ENCODE measurements at regions of chr10 and their contacts with region 1.

Region 1: DNA sequence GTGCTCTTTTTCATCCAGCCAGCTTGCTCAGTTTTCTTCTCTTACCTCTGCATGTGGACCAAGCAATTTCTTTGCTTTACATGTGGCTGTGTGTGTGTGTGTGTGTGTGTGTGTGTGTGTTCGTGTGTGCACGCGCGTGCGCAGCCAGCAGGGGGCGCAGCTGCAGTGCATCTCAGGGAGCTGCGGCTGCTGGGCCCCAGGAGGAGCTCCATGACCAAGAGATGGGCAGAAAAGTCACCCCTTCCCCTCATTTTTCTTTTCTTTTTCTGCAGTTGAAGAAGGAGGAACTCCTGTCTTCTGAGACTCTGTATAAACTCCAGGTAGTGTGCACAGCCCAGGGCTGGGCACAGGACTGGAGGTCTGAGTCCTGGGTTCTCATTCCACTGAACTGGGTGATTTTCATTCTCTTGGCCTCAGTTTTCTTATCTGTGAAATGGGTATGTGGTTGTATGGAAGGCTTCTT is 41.8 kb downstream of the BLNK start:
- DNase-seq: peak; percentile 80
- H3K4me3 Mint-ChIP-seq: no peak overlapping the region
- H3K27ac Mint-ChIP-seq: no peak overlapping the region
- H3K4me1 Mint-ChIP-seq: no peaks in the 10 kb centered on the region
- H3K27me3 Mint-ChIP-seq: no peaks in the 10 kb centered on the region

Region 2: DNA sequence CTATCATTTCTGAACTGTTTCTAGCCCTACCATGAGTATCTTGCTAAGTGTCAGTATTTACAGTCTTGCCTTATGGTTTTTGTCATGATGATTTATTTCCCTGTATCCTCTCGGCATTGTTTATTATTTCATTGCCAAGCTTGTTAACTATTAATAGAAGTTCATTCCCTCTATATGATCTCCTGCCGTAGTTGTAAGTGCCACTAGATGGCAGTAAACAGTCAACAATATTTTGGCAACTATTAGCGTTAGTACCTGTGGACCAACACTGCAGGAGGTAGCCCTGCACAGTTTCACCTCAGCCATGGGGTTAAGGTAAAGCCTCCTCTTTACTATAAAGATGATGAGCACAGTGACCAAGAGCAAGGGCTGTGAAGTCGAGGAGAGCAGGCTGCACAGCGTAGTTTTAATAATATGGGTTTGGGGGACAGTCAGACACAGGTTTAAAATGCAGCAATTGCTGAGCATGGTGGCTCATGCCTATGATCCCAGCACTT is 212.4 kb before region 1 on chr10:
- CTCF ChIA-PET with region 1: interaction called, 24 read pairs
- intact Hi-C with region 1: loop called (anchors 2 kb)
- DNase-seq: peak; percentile 53
- H3K4me3 Mint-ChIP-seq: no peak overlapping the region
- H3K27ac Mint-ChIP-seq: no peak overlapping the region
- H3K4me1 Mint-ChIP-seq: no peaks in the 10 kb centered on the region
- H3K27me3 Mint-ChIP-seq: no peaks in the 10 kb centered on the region

Region 3: DNA sequence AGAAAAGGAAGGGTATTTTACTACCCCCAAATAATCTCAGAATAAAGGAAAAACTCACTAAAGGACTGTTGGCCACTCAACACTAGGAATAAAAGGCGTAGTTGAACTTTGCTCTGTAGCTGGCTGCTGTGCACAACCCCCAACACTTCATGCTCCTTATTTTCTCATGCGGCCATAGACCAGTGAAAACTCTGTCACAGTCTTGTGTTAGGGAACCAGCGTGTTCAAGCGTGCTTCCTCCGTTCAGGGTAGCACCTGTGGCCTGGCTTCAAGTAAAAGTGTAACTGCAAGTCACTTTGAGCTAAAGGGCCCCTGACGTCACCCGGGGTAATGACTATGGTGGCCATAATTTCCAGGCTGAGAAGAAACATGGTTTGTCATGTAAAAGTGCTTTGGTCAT is 14.8 kb after region 1 on chr10:
- CTCF ChIA-PET with region 1: interaction called, 12 read pairs
- intact Hi-C with region 1: no loop called
- DNase-seq: no peak
- H3K4me3 Mint-ChIP-seq: no peak overlapping the region
- H3K27ac Mint-ChIP-seq: no peak overlapping the region
- H3K4me1 Mint-ChIP-seq: no peaks in the 10 kb centered on the region
- H3K27me3 Mint-ChIP-seq: peaks cover 3% of the 10 kb centered on the region

Region 4: DNA sequence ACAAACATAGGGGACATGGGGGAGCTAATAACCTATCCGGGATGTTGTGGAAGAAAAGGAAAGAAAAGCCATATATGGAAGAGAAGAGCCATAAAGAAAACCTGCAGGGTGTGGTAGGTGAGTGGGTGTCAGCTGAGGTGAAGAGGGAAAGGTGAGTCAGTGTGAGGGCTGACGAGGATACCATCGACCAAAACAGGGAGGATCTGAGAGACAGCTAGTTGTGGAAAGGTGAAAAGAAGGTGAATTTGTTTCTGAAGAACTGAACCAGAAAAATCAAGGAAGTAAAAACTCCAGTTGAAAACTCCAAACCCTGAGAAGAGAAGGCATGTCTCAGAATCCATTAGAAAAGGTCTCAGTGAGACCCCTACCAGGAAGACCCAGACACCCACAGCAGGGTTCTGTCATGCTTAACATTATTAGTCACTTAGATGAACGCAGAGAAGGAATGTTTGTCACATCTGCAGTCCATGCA is 37.7 kb after region 1 on chr10:
- CTCF ChIA-PET with region 1: interaction called, 10 read pairs
- intact Hi-C with region 1: no loop called
- DNase-seq: no peak
- H3K4me3 Mint-ChIP-seq: no peak overlapping the region
- H3K27ac Mint-ChIP-seq: no peak overlapping the region
- H3K4me1 Mint-ChIP-seq: no peaks in the 10 kb centered on the region
- H3K27me3 Mint-ChIP-seq: peaks cover 6% of the 10 kb centered on the region

Region 5: DNA sequence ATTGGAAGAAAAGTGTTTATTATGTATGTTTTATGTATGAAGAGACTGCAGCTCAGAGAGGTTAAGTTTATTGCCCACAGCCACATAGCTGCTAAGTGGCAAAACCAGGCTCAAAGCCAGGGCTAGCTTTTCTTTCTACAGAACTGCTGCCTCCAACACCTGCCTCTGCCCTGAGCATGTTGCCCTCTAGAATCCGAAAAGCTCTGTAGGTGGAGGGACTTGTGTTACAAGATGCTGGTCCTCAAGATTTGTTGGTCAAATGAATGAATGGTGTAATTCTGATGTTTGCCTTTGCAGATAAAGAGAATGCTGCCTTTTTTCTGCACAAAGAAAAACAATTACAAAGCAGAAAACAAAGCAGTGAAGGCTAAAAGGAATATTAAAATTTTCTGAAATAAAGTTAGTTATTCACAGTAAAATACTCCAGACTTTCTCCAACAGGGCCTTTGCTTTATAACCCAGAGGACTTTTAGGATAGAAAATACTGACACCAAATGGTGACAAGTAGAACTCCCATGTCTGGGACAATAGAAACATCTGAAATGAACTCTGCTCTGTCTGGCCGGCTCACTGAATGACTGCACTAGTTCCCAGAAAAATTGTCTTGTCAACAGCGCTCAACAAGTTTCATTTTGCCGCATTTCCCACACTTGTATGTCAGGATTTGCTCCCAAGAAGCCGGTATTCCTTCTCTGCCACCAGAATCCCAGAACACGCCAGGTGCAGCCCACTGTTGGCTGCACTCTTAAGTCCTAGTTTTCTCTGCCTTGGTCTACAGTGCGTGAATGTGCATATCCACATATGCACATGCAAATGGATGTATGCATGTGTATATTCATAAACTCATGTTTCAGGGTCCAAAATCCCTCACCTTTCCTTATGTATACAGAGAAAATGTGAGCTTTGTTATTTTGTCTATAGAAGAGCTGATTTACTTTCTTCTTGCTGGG is 63.6 kb after region 1 on chr10:
- CTCF ChIA-PET with region 1: interaction called, 98 read pairs
- intact Hi-C with region 1: loop called (anchors 1 kb)
- DNase-seq: peak; percentile 31
- H3K4me3 Mint-ChIP-seq: no peak overlapping the region
- H3K27ac Mint-ChIP-seq: no peak overlapping the region
- H3K4me1 Mint-ChIP-seq: peaks cover 17% of the 10 kb centered on the region
- H3K27me3 Mint-ChIP-seq: no peaks in the 10 kb centered on the region

Region 6: DNA sequence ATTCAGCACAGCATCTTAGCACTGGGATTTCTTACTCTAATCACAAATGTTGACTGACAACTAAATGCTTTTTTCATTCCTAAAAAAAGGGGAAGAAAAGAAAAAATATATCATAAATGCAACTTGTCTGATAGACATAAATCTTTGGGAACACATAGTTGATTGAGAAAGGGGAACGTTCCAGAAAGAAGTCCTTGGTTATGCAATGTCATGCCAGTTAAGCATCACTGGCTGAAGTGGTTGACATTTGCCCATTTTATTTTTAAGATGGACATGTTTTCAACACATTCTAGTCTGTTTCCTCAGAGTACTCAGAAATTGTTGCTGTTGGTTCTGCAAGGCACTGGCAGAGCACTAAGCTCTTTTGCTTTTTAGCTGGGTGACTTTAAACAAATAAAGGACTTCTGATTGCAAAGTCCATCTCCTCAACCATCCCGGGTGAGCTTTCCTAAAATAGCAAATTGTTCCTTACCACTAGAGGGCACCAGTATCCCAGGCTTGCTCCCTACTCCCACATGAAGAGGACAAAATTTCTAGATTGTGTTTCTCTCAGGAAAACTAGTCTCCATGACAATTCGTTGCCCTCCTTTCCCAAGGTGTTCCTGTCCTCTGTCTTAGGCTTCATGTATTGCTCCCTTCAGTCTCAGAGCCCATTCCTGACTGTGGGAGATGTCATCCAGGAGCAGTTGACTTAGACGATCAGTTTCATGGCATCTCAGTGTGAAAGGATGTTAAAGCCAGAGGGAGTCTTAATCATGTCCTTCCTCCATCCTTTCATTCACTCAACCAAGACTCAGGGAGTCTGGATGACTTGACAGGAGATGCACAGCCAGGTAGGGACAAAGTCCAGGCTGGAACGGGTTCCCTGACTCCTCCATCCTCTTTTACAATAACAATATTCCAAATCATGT is 105.3 kb after region 1 on chr10:
- CTCF ChIA-PET with region 1: interaction called, 62 read pairs
- intact Hi-C with region 1: loop called (anchors 1 kb)
- DNase-seq: peak; percentile 9
- H3K4me3 Mint-ChIP-seq: no peak overlapping the region
- H3K27ac Mint-ChIP-seq: no peak overlapping the region
- H3K4me1 Mint-ChIP-seq: peaks cover 21% of the 10 kb centered on the region
- H3K27me3 Mint-ChIP-seq: peaks cover 3% of the 10 kb centered on the region

Measured in activated naive CD4-positive, alpha-beta T cell treated with anti-CD3 and anti-CD28 coated beads for 36 hours (primary cell).